ENCODE measurements at regions of chr4 and their contacts with region 1.

Region 1: GRCh38 chr4:170027181-170027829 is 1.1 kb upstream of the MFAP3L start:
- DNase-seq: peak; percentile 94

Region 2: GRCh38 chr4:169627307-169627706 is 400.0 kb before region 1 on chr4:
- in situ Hi-C with region 1: loop called (anchors 25 kb)
- DNase-seq: no peak

Region 3: GRCh38 chr4:169810325-169811323 is 216.7 kb before region 1 on chr4:
- in situ Hi-C with region 1: loop called (anchors 25 kb)
- DNase-seq: peak; percentile 64

Measured in KBM-7 (cell line).